Aorta (tissue), 5 donors: ENCODE measurements at regions of chr12 and their contacts with region 1.

Region 1: GRCh38 chr12:108305520-108305919 is 33.6 kb downstream of the CMKLR1 start:
- DNase-seq: peak; percentile 95 to 97
- ATAC-seq: peak; percentile 82
- H3K4me3 ChIP-seq: peak overlapping the region in 1 of 2 donors; percentile 22
- H3K27ac ChIP-seq: peak overlapping the region; percentile 88 to 99
- H3K4me1 ChIP-seq: peaks cover 2 to 11% of the 10 kb centered on the region in 2 donors
- H3K27me3 ChIP-seq: no peaks in the 10 kb centered on the region

Region 2: GRCh38 chr12:106357549-106358395 is 1947.7 kb before region 1 on chr12 and contains the start of gene POLR3B:
- intact Hi-C with region 1: no loop called
- DNase-seq: peak; percentile 97 to 98
- ATAC-seq: peak; percentile 99
- H3K4me3 ChIP-seq: peak within 1 kb of the TSS; percentile 53 to 93
- H3K27ac ChIP-seq: peak within 1 kb of the TSS; percentile 24 to 96
- H3K4me1 ChIP-seq: peaks cover 0 to 3% of the 10 kb centered on the region in 2 donors
- H3K27me3 ChIP-seq: no peaks in the 10 kb centered on the region
- total RNA-seq, gene POLR3B: 5.5 to 8.0 TPM

Region 3: GRCh38 chr12:108119126-108119976 is 186.2 kb before region 1 on chr12:
- intact Hi-C with region 1: loop called (anchors 10 kb)
- DNase-seq: no peak
- ATAC-seq: no peak
- H3K4me3 ChIP-seq: no peak overlapping the region
- H3K27ac ChIP-seq: no peak overlapping the region
- H3K4me1 ChIP-seq: peaks cover 0 to 4% of the 10 kb centered on the region in 2 donors
- H3K27me3 ChIP-seq: no peaks in the 10 kb centered on the region

Region 4: DNA sequence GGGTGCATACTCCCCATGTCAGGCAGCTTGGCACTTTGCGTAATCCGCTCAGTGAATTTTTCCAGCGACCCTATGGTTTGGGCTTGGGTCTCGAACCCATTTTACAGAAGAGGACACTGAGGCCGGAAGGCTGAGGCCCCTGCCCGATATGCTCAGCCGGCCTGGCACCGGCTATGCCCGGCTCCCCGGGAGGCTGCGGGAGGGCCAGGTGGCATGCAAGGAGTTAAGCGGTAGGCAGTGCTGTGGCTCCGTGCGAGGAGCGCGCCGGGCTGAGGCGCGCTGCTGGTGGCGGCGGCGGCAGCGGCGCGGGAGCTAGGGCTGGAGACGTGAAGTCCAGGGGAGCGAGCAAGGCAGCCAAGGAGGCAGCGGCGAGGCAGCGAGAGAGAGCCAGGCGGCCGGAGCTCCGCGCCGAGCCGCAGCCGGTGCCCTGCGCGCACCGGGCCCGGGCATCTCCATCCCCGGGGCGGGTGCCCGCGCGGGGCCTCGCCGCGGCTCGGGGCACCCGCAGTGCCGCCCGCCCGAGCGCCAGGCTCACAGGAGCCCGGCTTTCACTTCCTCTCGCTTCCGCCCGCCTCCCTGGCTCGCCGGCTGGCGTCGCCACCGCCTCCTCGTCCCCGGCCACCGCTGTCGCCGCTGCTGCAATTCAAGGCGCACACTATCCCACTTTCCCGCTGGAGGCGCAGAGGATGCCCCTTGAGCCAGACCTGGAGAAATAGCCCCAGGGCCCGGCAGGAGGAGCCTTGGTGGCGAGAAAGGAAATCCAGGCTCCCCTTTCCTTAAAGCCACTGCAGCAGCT is 176.3 kb before region 1 on chr12 and contains the start of gene WSCD2:
- intact Hi-C with region 1: loop called in 1 of 2 experiments (anchors 10 kb)
- DNase-seq: peak; percentile 80 to 86
- ATAC-seq: peak; percentile 66
- H3K4me3 ChIP-seq: peak within 1 kb of the TSS; percentile 23 to 40
- H3K27ac ChIP-seq: peak within 1 kb of the TSS in 1 of 2 donors; percentile 7
- H3K4me1 ChIP-seq: no peaks in the 10 kb centered on the region
- H3K27me3 ChIP-seq: no peaks in the 10 kb centered on the region
- total RNA-seq, gene WSCD2: 5.6 to 9.7 TPM

Region 5: GRCh38 chr12:108175310-108175709 is 130.2 kb before region 1 on chr12:
- intact Hi-C with region 1: no loop called
- DNase-seq: no peak
- ATAC-seq: no peak
- H3K4me3 ChIP-seq: no peak overlapping the region
- H3K27ac ChIP-seq: no peak overlapping the region
- H3K4me1 ChIP-seq: no peaks in the 10 kb centered on the region
- H3K27me3 ChIP-seq: no peaks in the 10 kb centered on the region

Region 6: GRCh38 chr12:108270035-108270848 is 35.3 kb before region 1 on chr12:
- intact Hi-C with region 1: no loop called
- DNase-seq: no peak
- ATAC-seq: no peak
- H3K4me3 ChIP-seq: no peak overlapping the region
- H3K27ac ChIP-seq: no peak overlapping the region
- H3K4me1 ChIP-seq: no peaks in the 10 kb centered on the region
- H3K27me3 ChIP-seq: no peaks in the 10 kb centered on the region

Region 7: DNA sequence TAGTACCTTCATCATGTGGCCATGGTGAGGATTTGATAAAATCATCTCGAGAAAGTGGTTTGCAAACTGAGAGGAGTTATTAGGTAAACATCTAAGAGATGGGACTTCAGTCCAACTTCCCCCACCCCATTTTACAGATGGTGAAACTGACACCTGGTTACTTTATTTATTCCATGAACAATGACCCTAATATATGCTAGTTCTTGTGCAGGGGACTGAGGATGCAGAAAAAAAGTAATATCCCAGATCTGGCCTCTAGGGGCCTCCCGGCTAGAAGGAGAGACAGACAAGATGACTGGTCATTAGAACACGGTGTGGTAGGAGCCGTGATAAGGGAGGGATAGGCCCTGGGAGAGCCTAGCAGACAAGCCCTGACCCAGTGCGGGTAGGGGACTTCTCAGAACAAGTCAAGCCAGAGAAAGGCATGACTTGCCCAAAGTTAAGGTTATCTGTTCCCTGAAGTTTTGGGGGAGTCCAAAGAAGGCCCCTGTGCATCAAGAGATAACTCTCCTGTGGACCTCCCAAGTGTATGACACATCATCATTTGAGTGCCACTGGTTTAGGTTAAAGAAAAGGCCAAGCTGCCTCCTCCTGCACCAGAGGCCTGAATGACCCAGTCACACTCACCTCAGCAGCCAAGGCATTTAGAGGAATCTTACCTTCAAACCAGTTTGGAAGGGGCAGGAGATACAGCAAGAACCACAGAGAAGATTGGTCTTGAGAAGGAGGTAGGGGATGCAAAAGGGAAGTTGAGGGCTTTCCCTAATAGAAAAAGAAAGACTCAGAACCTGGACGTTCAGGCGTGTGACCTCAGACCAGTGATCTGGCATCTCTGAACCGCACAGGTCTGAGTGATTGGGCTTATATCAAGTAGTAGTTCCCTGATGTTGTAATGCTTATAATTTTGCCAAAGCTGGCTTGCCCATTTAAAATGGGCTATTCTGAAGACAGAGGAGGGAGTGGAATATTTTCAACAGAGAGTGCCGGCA is 32.0 kb after region 1 on chr12:
- intact Hi-C with region 1: loop called (anchors 2 to 5 kb)
- DNase-seq: peak; percentile 55 to 58
- ATAC-seq: no peak
- H3K4me3 ChIP-seq: peak overlapping the region; percentile 32 to 50
- H3K27ac ChIP-seq: peak overlapping the region; percentile 22 to 55
- H3K4me1 ChIP-seq: peaks cover 2 to 4% of the 10 kb centered on the region in 2 donors
- H3K27me3 ChIP-seq: no peaks in the 10 kb centered on the region

Region 8: GRCh38 chr12:108342985-108343384 is 37.5 kb after region 1 on chr12:
- intact Hi-C with region 1: loop called (anchors 2 to 5 kb)
- DNase-seq: no peak
- ATAC-seq: peak; percentile 17
- H3K4me3 ChIP-seq: no peak overlapping the region
- H3K27ac ChIP-seq: peak overlapping the region; percentile 40 to 56
- H3K4me1 ChIP-seq: no peaks in the 10 kb centered on the region
- H3K27me3 ChIP-seq: no peaks in the 10 kb centered on the region